ENCODE measurements at regions of chr16 and their contacts with region 1.

Region 1: GRCh38 chr16:9976601-9977000 is 205.6 kb downstream of the GRIN2A start:
- DNase-seq: no peak
- H3K4me3 Mint-ChIP-seq: no peak overlapping the region
- H3K27ac Mint-ChIP-seq: no peak overlapping the region
- H3K4me1 Mint-ChIP-seq: peaks cover 17% of the 10 kb centered on the region
- H3K27me3 Mint-ChIP-seq: no peaks in the 10 kb centered on the region
- CTCF ChIP-seq: no peak

Region 2: DNA sequence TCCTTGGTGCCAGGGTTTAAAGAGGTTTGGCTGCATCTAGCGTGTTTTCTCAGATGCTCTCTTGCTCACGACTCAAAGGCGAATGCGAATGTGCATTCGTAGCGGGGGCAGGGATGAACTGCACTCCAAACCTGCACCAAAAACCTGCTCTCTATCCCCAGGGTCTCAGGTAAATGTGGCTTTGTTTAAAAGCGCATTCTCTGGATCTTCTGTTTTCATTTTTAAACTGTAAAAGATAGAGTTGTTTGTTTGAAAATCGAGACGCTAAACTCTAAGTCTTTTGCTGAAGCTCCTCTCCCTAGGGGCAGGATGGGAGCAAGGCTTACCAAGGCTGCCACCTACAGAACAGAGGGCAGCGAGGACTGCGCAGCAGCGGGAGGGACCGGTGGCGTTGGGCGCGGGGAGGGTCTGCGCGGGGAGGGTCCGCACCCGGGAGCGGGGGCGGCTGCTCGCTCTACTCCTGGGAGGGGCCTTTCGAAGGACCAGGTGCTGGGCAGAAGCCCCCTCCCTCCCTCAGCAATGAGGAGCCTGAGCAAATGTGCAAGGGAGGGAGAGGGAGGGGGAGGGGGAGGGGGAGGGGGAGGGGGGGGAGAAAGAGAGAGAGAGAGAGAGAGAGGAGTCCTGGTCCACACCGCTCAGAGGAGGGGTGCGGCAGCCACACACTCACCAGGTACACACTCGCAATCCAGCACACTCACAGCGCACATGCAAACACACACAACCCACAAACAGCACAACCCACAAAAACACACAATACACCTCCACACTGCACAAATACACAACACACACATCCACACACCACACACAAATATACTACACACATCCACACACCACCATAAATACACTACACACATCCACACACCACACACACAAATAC is 62.9 kb after region 1 on chr16:
- CTCF ChIA-PET with region 1: no interaction called
- intact Hi-C with region 1: loop called (anchors 10 kb)
- DNase-seq: no peak
- H3K4me3 Mint-ChIP-seq: no peak overlapping the region
- H3K27ac Mint-ChIP-seq: no peak overlapping the region
- H3K4me1 Mint-ChIP-seq: peaks cover 30% of the 10 kb centered on the region
- H3K27me3 Mint-ChIP-seq: no peaks in the 10 kb centered on the region
- CTCF ChIP-seq: no peak

Region 3: DNA sequence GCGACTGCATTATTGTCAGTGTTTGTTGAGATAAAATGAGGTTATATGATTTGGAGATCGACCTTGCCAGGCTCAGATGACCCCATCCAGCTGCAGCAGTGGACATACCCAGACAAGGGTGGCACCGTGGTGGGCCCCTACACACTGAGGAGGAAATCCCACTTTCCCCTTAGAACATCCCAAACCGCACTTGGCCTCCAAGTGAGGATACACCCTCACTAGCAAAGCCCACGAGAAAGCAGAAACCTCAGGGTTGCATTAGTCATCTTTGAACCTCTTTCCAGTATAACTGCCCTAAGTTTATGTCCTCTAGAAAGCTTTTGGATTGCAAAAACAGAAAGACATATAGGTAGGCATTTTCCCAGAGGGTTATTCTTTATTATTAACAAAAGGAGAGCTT is 1069.2 kb after region 1 on chr16:
- CTCF ChIA-PET with region 1: no interaction called
- intact Hi-C with region 1: no loop called
- DNase-seq: no peak
- H3K4me3 Mint-ChIP-seq: no peak overlapping the region
- H3K27ac Mint-ChIP-seq: no peak overlapping the region
- H3K4me1 Mint-ChIP-seq: no peaks in the 10 kb centered on the region
- H3K27me3 Mint-ChIP-seq: no peaks in the 10 kb centered on the region
- CTCF ChIP-seq: no peak

Measured in Calu3 (cell line).